ENCODE measurements at regions of chr9 and their contacts with region 1.

Region 1: GRCh38 chr9:126947529-126947928 is 32.9 kb downstream of the RALGPS1 start:
- DNase-seq: no peak
- CTCF ChIP-seq: peak; percentile 31

Region 2: GRCh38 chr9:126164796-126165525 is 782.6 kb before region 1 on chr9:
- in situ Hi-C with region 1: no loop called
- DNase-seq: peak; percentile 4
- CTCF ChIP-seq: no peak

Region 3: GRCh38 chr9:126836216-126836615 is 111.3 kb before region 1 on chr9:
- in situ Hi-C with region 1: no loop called
- DNase-seq: no peak
- CTCF ChIP-seq: no peak

Region 4: GRCh38 chr9:127423934-127424675 is 476.6 kb after region 1 on chr9 and contains the start of gene ZNF79:
- in situ Hi-C with region 1: loop called (anchors 25 kb)
- DNase-seq: peak; percentile 97
- CTCF ChIP-seq: no peak

Measured in GM13976 (cell line).